ENCODE measurements at regions of chr11 and their contacts with region 1.

Region 1: GRCh38 chr11:113752932-113753331 is 20.6 kb downstream of the ZW10 start:
- DNase-seq: no peak
- H3K4me3 ChIP-seq: no peak overlapping the region
- H3K27ac ChIP-seq: no peak overlapping the region
- H3K4me1 ChIP-seq: no peaks in the 10 kb centered on the region
- H3K27me3 ChIP-seq: no peaks in the 10 kb centered on the region
- CTCF ChIP-seq: no peak

Region 2: DNA sequence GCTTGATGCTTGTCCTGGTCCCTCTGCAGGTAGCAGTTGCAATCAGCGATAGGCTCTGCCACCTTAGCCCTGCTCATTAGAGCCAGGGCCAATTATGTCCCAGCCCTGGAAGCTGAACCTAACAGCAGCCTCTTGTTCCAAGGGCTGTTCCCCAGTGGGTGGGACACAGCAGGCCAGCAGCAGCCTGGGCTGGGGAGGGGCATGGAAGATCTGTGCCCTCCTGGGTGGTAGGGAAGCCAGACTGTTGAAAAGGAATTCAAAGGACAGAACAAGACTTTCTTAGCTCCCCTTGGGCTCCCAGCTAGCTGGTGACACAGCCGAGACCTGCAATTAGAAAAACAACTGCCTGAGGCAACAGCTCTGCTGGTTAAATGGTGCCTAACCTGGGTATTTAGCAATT is 295.1 kb before region 1 on chr11:
- CTCF ChIA-PET with region 1: no interaction called
- POLR2A ChIA-PET with region 1: no interaction called
- intact Hi-C with region 1: no loop called
- DNase-seq: no peak
- H3K4me3 ChIP-seq: no peak overlapping the region
- H3K27ac ChIP-seq: no peak overlapping the region
- H3K4me1 ChIP-seq: no peaks in the 10 kb centered on the region
- H3K27me3 ChIP-seq: peaks cover 59% of the 10 kb centered on the region
- CTCF ChIP-seq: no peak

Region 3: DNA sequence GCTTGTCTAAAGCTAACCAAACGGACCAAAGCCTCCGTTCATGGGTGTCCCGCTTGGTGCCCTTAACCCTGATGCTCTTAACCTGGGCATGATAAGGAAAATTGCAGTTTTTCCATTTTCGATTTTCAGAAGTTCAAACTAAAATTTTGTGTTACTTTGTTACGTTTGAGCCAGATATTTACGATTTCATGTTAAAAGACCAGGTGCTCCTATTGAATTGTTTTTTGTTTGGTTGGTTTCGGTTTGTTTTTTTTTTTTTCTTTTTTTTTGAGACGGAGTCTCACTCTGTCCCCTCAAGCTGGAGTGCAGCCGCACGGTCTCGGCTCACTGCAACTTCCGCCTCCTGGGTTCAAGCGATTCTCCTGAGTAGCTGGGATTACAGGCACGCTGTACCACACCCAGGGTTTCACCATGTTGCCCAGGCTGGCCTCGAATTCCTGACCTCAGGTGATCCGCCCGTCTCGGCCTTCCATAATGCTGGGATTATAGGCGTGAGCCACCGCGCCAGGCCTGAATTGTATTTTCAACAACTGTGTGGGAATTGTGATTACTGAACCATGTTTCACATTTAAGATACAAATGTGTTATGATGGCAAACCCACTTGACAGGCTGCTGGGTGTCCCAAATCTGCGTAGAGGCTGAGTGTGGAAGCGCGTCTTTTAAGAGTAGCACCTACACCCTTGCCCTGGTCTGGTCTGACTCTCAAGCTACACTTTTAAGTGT is 123.3 kb after region 1 on chr11:
- CTCF ChIA-PET with region 1: no interaction called
- POLR2A ChIA-PET with region 1: interaction called, 11 read pairs
- intact Hi-C with region 1: no loop called
- DNase-seq: no peak
- H3K4me3 ChIP-seq: peak overlapping the region; percentile 67
- H3K27ac ChIP-seq: peak overlapping the region; percentile 70
- H3K4me1 ChIP-seq: peaks cover 8% of the 10 kb centered on the region; the same call in 1 of the 2 replicates
- H3K27me3 ChIP-seq: no peaks in the 10 kb centered on the region
- CTCF ChIP-seq: no peak